ENCODE measurements at regions of chr6 and their contacts with region 1.

Region 1: GRCh38 chr6:44074439-44075136 is 52.7 kb downstream of the MRPL14 start:
- DNase-seq: peak; percentile 94

Region 2: DNA sequence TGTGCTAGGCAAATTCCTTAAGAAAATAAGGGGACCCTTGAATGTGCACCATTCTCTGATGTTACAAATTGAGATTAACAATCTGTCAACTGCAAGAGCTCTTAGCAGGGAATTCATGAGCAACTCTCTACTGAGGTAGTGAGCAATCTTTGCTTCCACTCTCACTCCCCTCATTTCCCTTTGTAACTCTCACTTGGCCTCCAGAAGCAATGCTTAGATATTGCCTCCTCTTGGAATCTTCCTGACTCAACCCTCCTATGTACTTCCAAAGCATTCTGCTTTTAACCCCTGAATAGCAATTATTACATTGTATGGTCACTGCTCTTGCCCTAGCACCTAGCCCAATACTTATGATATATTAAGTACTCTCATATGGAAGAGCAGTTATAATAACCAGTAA is 515.3 kb before region 1 on chr6:
- intact Hi-C with region 1: no loop called
- DNase-seq: no peak

Region 3: GRCh38 chr6:43667245-43668150 is 407.1 kb before region 1 on chr6:
- intact Hi-C with region 1: loop called (anchors 1 to 5 kb)
- DNase-seq: peak; percentile 93

Region 4: DNA sequence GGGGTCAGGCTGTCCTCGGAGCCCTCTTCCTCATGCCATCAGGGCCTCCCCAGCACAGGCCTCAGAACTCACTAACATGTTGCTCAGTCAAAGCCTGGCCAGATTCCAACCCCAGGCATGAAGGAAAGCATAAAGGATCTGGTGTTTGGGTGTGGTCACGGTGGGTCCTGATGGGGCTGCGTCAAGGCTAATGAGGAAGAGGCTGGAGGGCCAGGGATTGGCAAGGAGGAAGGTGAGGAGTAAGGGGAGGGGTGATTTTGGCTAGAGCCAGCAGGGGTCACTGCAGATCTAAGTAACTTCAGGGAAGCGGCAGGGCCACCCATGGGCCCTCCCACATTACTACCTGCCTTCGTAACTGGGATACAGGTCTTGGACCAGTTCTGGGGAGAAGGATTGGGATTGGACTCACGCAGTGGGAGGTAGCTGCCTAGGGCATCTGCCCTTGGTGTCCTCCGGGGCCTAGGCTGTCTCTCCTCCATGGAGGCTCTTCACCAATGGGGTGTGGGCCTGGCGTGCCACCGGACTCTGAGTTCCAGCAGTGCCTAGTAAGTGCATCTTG is 350.8 kb before region 1 on chr6:
- intact Hi-C with region 1: loop called (anchors 2 kb)
- DNase-seq: peak; percentile 81

Region 5: DNA sequence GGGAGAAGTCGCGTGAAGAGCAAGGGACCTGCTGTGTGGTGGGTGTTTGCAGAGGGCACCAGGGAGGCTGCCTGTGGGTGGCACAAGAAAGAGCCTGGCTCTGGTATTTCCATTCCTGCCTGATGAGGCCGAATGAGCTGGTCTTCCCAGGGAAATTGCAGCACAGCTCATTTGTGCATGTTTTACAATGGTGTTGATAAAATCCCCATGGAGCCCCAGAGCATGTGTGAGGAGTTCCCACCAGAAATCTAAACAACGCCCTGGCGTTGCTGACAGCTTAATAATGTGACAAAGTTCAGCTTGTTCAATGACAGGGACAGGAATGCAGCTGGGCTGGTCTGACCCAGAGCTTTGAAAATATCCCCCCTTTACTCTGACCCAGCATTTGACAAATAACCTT is 1805.6 kb after region 1 on chr6:
- intact Hi-C with region 1: no loop called
- DNase-seq: no peak